ENCODE measurements at regions of chr12 and their contacts with region 1.

Region 1: DNA sequence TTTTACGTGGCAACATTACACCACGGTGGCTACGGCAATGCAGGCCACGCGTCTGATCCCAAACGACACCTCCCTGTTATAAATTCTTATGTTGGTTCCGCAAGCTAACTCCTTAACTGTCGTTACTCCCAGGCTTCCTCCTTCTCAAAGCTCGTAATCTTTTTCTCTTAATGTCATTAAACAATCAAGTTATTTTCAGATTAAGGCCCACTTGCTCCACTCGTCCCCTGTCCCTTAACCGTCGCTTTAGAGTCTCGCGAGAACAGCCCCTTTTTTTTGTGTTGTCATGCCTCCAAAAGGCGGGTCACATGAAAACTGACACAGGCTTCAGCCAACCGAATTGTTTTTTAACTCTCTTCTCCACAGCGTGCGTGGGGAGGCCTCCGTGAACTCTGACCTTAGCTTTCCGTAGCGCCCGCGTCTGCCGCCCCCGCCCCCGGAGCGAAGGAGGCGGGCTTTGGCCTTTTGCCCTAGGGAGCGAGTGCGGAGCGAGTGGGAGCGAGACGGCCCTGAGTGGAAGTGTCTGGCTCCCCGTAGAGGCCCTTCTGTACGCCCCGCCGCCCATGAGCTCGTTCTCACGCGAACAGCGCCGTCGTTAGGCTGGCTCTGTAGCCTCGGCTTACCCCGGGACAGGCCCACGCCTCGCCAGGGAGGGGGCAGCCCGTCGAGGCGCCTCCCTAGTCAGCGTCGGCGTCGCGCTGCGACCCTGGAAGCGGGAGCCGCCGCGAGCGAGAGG is at the start of gene CAND1:
- DNase-seq: peak; percentile 90 to 99 (median 94)
- ATAC-seq: peak; percentile 77
- H3K4me3 ChIP-seq: peak within 1 kb of the TSS; percentile 91
- H3K4me3 Mint-ChIP-seq: peak within 1 kb of the TSS; percentile 94
- H3K27ac ChIP-seq: peak within 1 kb of the TSS; percentile 96 to 98
- H3K27ac Mint-ChIP-seq: peak within 1 kb of the TSS; percentile 97
- H3K4me1 ChIP-seq: peaks cover 24% of the 10 kb centered on the region
- H3K4me1 Mint-ChIP-seq: peaks cover 50% of the 10 kb centered on the region
- H3K27me3 ChIP-seq: no peaks in the 10 kb centered on the region
- H3K27me3 Mint-ChIP-seq: no peaks in the 10 kb centered on the region
- CTCF ChIP-seq: no peak
- total RNA-seq, gene CAND1: 118 to 124 TPM

Region 2: DNA sequence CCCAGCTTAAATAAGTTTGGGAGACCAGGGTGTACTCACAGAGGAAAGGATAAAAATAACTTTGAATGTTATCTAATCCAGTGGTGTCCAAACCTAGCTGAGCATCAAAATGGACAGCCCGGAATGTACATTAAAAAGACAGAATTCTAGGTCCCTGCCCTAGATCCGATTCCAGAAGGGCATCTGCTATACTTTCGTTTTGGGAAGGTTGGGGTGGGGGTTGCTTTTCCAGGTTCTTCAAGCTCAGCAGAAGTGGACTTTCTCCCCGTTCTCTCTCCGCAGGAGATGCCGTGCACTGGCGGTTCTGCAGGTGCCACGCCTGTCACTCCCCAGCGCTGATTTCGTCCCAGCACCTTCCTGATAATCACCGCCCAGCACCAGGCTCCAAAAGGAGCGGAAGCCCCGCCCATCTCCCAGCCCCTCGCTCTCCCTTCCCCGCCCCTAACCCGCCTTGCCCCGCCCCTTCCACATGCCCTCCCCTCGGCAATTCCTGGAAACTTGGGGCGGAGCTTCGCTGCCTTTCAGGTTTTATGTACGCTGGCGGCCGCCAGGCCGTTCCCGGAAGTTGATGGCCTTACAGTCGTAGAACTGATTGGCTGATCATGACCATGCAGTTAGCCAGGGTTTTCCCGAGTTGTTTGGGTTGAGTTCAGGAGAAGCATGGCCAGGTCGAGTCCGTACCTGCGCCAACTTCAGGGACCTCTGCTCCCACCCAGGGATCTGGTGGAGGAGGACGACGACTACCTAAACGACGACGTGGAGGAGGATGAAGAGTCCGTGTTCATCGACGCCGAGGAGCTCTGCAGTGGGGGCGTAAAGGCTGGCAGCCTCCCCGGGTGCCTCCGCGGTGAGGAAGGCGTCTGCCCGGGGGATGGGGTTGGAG is 966.9 kb before region 1 on chr12 and contains the start of gene HELB:
- CTCF ChIA-PET with region 1: no interaction called
- POLR2A ChIA-PET with region 1: interaction called, 3 read pairs
- intact Hi-C with region 1: loop called in 1 of 2 experiments (anchors 10 kb)
- DNase-seq: peak; percentile 89 to 100 (median 96)
- ATAC-seq: peak; percentile 76
- H3K4me3 ChIP-seq: peak within 1 kb of the TSS; percentile 87
- H3K4me3 Mint-ChIP-seq: peak within 1 kb of the TSS; percentile 97
- H3K27ac ChIP-seq: peak within 1 kb of the TSS; percentile 86 to 89
- H3K27ac Mint-ChIP-seq: peak within 1 kb of the TSS; percentile 87
- H3K4me1 ChIP-seq: peaks cover 17% of the 10 kb centered on the region
- H3K4me1 Mint-ChIP-seq: peaks cover 59% of the 10 kb centered on the region
- H3K27me3 ChIP-seq: no peaks in the 10 kb centered on the region
- H3K27me3 Mint-ChIP-seq: no peaks in the 10 kb centered on the region
- CTCF ChIP-seq: no peak
- total RNA-seq, gene HELB: 33.8 to 35.8 TPM

Region 3: GRCh38 chr12:67068761-67069450 is 200.2 kb before region 1 on chr12:
- CTCF ChIA-PET with region 1: no interaction called
- POLR2A ChIA-PET with region 1: interaction called, 16 read pairs
- intact Hi-C with region 1: loop called in 1 of 2 experiments (anchors 10 kb)
- DNase-seq: peak in 13 of 14 experiments; percentile 9 to 73 (median 38)
- ATAC-seq: peak; percentile 74
- H3K4me3 ChIP-seq: peak overlapping the region; percentile 51
- H3K4me3 Mint-ChIP-seq: peak overlapping the region; percentile 96
- H3K27ac ChIP-seq: no peak overlapping the region
- H3K27ac Mint-ChIP-seq: peak overlapping the region; percentile 18
- H3K4me1 ChIP-seq: peaks cover 18% of the 10 kb centered on the region
- H3K4me1 Mint-ChIP-seq: peaks cover 11% of the 10 kb centered on the region
- H3K27me3 ChIP-seq: peaks cover 10 to 40% of the 10 kb centered on the region in 2 experiments
- H3K27me3 Mint-ChIP-seq: peaks cover 33% of the 10 kb centered on the region
- CTCF ChIP-seq: no peak

Region 4: DNA sequence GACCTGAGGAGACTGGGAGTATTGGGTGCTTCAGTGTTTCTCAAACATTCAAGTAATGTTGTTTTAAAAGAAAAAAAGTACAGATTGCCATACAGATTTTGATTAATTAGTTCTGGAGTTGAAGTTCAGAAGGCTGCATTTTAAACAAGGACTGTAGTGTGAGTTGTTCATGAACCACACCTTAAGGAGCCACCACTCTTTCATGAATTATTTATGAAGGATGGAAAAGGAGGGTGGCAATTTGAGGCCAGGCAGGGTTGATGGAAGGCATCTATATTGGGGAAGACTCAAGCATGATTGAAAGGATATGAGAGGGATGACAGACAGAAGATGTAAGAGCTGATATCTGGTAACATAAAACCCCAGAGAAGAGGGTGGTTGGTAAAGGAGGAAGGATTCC is 146.5 kb before region 1 on chr12:
- CTCF ChIA-PET with region 1: no interaction called
- POLR2A ChIA-PET with region 1: no interaction called
- intact Hi-C with region 1: no loop called
- DNase-seq: no peak
- ATAC-seq: no peak
- H3K4me3 ChIP-seq: no peak overlapping the region
- H3K4me3 Mint-ChIP-seq: no peak overlapping the region
- H3K27ac ChIP-seq: no peak overlapping the region
- H3K27ac Mint-ChIP-seq: no peak overlapping the region
- H3K4me1 ChIP-seq: no peaks in the 10 kb centered on the region
- H3K4me1 Mint-ChIP-seq: no peaks in the 10 kb centered on the region
- H3K27me3 ChIP-seq: no peaks in the 10 kb centered on the region
- H3K27me3 Mint-ChIP-seq: peaks cover 12% of the 10 kb centered on the region
- CTCF ChIP-seq: no peak

Region 5: DNA sequence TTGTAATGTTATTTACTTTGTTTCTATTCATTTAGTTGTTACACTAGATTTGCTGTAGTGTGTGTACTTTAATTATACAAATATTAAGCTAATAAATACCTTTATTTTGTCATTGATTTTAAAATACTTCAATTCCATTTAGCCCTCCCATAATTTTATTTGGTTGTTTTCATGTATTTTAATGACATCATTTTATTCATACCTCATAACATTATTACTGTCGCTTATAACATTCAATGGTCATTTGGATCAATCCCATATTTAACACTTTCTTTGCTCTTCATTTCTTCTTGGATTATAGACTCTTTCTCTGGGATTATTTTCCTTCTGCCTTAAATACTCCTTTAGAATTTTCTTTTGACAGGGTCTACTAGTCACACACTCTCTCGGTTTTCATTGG is 86.5 kb before region 1 on chr12:
- CTCF ChIA-PET with region 1: no interaction called
- POLR2A ChIA-PET with region 1: no interaction called
- intact Hi-C with region 1: no loop called
- DNase-seq: no peak
- ATAC-seq: no peak
- H3K4me3 ChIP-seq: no peak overlapping the region
- H3K4me3 Mint-ChIP-seq: no peak overlapping the region
- H3K27ac ChIP-seq: no peak overlapping the region
- H3K27ac Mint-ChIP-seq: no peak overlapping the region
- H3K4me1 ChIP-seq: no peaks in the 10 kb centered on the region
- H3K4me1 Mint-ChIP-seq: no peaks in the 10 kb centered on the region
- H3K27me3 ChIP-seq: peaks cover 0 to 24% of the 10 kb centered on the region in 2 experiments
- H3K27me3 Mint-ChIP-seq: peaks cover 37% of the 10 kb centered on the region
- CTCF ChIP-seq: no peak

Region 6: GRCh38 chr12:67222302-67222701 is 46.8 kb before region 1 on chr12:
- CTCF ChIA-PET with region 1: no interaction called
- POLR2A ChIA-PET with region 1: no interaction called
- intact Hi-C with region 1: no loop called
- DNase-seq: no peak
- ATAC-seq: no peak
- H3K4me3 ChIP-seq: no peak overlapping the region
- H3K4me3 Mint-ChIP-seq: no peak overlapping the region
- H3K27ac ChIP-seq: no peak overlapping the region
- H3K27ac Mint-ChIP-seq: no peak overlapping the region
- H3K4me1 ChIP-seq: no peaks in the 10 kb centered on the region
- H3K4me1 Mint-ChIP-seq: no peaks in the 10 kb centered on the region
- H3K27me3 ChIP-seq: no peaks in the 10 kb centered on the region
- H3K27me3 Mint-ChIP-seq: no peaks in the 10 kb centered on the region
- CTCF ChIP-seq: no peak

Region 7: DNA sequence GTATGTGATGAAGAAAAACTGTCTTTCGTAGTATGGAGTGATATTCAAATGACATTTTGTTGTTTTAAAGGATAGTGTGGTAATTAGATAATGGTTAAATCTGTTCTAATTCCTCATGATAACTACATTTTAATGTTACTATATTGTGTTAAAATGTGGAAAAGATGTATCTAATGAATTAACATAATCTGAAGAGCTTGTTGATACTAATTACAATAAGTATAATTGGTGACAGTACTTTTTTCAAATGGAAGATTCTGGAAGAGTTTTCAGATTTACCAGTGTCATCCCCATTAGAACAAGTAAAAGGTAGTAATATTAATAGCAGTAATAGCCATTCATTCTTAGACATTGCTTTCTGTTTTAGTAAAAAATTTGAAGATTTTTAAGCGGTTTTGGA is 37.6 kb after region 1 on chr12:
- CTCF ChIA-PET with region 1: interaction called, 3 read pairs
- POLR2A ChIA-PET with region 1: interaction called, 11 read pairs
- intact Hi-C with region 1: no loop called
- DNase-seq: no peak
- ATAC-seq: no peak
- H3K4me3 ChIP-seq: no peak overlapping the region
- H3K4me3 Mint-ChIP-seq: no peak overlapping the region
- H3K27ac ChIP-seq: no peak overlapping the region
- H3K27ac Mint-ChIP-seq: no peak overlapping the region
- H3K4me1 ChIP-seq: no peaks in the 10 kb centered on the region
- H3K4me1 Mint-ChIP-seq: peaks cover 5% of the 10 kb centered on the region
- H3K27me3 ChIP-seq: no peaks in the 10 kb centered on the region
- H3K27me3 Mint-ChIP-seq: no peaks in the 10 kb centered on the region
- CTCF ChIP-seq: no peak

Region 8: GRCh38 chr12:67344979-67345710 is 76.1 kb after region 1 on chr12:
- CTCF ChIA-PET with region 1: no interaction called
- POLR2A ChIA-PET with region 1: no interaction called
- intact Hi-C with region 1: no loop called
- DNase-seq: no peak
- ATAC-seq: no peak
- H3K4me3 ChIP-seq: no peak overlapping the region
- H3K4me3 Mint-ChIP-seq: no peak overlapping the region
- H3K27ac ChIP-seq: no peak overlapping the region
- H3K27ac Mint-ChIP-seq: no peak overlapping the region
- H3K4me1 ChIP-seq: no peaks in the 10 kb centered on the region
- H3K4me1 Mint-ChIP-seq: no peaks in the 10 kb centered on the region
- H3K27me3 ChIP-seq: no peaks in the 10 kb centered on the region
- H3K27me3 Mint-ChIP-seq: no peaks in the 10 kb centered on the region
- CTCF ChIP-seq: no peak

Region 9: GRCh38 chr12:68317047-68317667 is 1048.1 kb after region 1 on chr12:
- CTCF ChIA-PET with region 1: no interaction called
- POLR2A ChIA-PET with region 1: no interaction called
- intact Hi-C with region 1: loop called in 1 of 2 experiments (anchors 10 kb)
- DNase-seq: peak in 10 of 14 experiments; percentile 16 to 79 (median 24)
- ATAC-seq: no peak
- H3K4me3 ChIP-seq: no peak overlapping the region
- H3K4me3 Mint-ChIP-seq: no peak overlapping the region
- H3K27ac ChIP-seq: no peak overlapping the region
- H3K27ac Mint-ChIP-seq: no peak overlapping the region
- H3K4me1 ChIP-seq: no peaks in the 10 kb centered on the region
- H3K4me1 Mint-ChIP-seq: no peaks in the 10 kb centered on the region
- H3K27me3 ChIP-seq: no peaks in the 10 kb centered on the region
- H3K27me3 Mint-ChIP-seq: no peaks in the 10 kb centered on the region
- CTCF ChIP-seq: peak; percentile 86